ENCODE measurements at regions of chr5 and their contacts with region 1.

Region 1: DNA sequence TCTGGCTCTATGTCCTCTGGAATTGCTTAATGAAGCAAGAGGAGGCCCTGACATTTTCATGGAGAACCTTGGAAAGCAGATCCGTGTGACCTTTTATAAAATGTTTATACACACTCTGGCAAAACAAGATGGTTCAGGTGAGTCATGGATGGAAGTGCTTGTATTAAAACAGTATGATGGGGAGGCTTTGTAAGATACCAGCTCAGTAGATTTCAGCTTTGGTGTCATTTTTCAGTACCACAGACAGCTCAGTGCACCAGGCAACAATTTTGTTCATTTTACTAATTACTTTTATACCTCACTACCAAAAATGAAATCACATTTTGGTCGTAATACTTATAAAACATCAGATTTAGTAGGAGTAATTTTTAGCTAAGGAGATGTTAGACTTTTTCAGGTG is 5.2 kb downstream of the KCNN2 start:
- DNase-seq: no peak
- ATAC-seq: no peak
- H3K4me3 ChIP-seq: no peak overlapping the region
- H3K27ac ChIP-seq: no peak overlapping the region
- H3K4me1 ChIP-seq: no peaks in the 10 kb centered on the region
- H3K27me3 ChIP-seq: peaks cover 0 to 10% of the 10 kb centered on the region in 2 experiments; a peak in 2 of 4 replicates
- CTCF ChIP-seq: no peak
- EP300 ChIP-seq: no peak
- POLR2A ChIP-seq: no peak
- RAD21 ChIP-seq: no peak

Region 2: DNA sequence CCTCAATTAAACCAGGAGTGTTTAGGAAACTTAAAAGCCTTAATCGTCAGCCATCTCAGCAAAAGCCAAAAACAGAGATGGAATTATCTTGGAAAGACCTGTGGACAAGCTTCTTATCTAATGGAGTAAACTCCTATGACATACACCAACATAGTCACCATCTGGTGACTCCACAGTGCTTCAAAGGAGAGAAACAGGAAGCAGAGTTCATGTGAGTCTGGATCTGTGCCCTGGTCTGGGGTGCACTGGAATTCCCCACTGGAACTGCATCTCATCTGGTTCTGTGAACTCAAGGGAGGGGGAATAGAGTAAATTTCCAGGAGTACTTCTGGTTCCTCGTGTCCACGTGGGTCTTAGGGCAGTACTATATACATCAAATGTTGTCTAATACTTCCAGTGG is 41.5 kb before region 1 on chr5:
- CTCF ChIA-PET with region 1: no interaction called
- POLR2A ChIA-PET with region 1: no interaction called
- RAD21 ChIA-PET with region 1: no interaction called
- SMC1A ChIA-PET with region 1: no interaction called
- in situ Hi-C with region 1: no loop called
- intact Hi-C with region 1: no loop called
- DNase-seq: no peak
- ATAC-seq: peak; percentile 60
- H3K4me3 ChIP-seq: no peak overlapping the region
- H3K27ac ChIP-seq: no peak overlapping the region
- H3K4me1 ChIP-seq: no peaks in the 10 kb centered on the region; the same call in 1 of the 2 replicates
- H3K27me3 ChIP-seq: no peaks in the 10 kb centered on the region
- CTCF ChIP-seq: no peak
- EP300 ChIP-seq: no peak
- POLR2A ChIP-seq: no peak
- RAD21 ChIP-seq: no peak

Region 3: GRCh38 chr5:114377946-114378345 is 10.9 kb after region 1 on chr5:
- CTCF ChIA-PET with region 1: interaction called, 13 read pairs
- POLR2A ChIA-PET with region 1: interaction called, 5 read pairs
- RAD21 ChIA-PET with region 1: interaction called, 17 read pairs
- SMC1A ChIA-PET with region 1: interaction called, 23 read pairs
- in situ Hi-C with region 1: no loop called
- intact Hi-C with region 1: no loop called
- DNase-seq: no peak
- ATAC-seq: no peak
- H3K4me3 ChIP-seq: no peak overlapping the region
- H3K27ac ChIP-seq: no peak overlapping the region
- H3K4me1 ChIP-seq: no peaks in the 10 kb centered on the region
- H3K27me3 ChIP-seq: no peaks in the 10 kb centered on the region
- CTCF ChIP-seq: no peak
- EP300 ChIP-seq: no peak
- POLR2A ChIP-seq: no peak
- RAD21 ChIP-seq: no peak

Region 4: DNA sequence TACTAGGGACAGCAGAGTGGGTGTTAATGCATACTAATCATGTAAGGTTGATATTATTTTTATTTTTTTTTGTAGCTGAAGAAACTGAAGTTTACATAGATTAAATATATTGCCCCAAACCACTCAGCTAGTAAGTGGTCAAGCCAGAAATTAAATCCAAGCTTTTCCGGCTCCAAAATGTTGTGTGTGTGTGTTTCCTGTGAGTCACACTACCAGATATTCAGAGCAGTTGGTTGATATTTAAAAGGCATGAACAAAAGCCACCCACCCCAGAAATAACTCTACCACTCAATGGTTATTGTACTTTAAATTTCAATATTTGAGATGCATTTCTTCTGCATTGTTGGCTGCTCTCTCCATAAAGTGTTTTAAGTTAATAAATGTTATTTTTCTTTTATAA is 24.3 kb after region 1 on chr5:
- CTCF ChIA-PET with region 1: interaction called, 5 read pairs
- POLR2A ChIA-PET with region 1: interaction called, 5 read pairs
- RAD21 ChIA-PET with region 1: interaction called, 4 read pairs
- SMC1A ChIA-PET with region 1: interaction called, 14 read pairs
- in situ Hi-C with region 1: no loop called
- intact Hi-C with region 1: no loop called
- DNase-seq: no peak
- ATAC-seq: no peak
- H3K4me3 ChIP-seq: no peak overlapping the region
- H3K27ac ChIP-seq: no peak overlapping the region
- H3K4me1 ChIP-seq: no peaks in the 10 kb centered on the region
- H3K27me3 ChIP-seq: no peaks in the 10 kb centered on the region
- CTCF ChIP-seq: no peak
- EP300 ChIP-seq: no peak
- POLR2A ChIP-seq: no peak
- RAD21 ChIP-seq: no peak

Region 5: GRCh38 chr5:114418176-114419066 is 51.4 kb after region 1 on chr5:
- CTCF ChIA-PET with region 1: interaction called, 12 read pairs
- POLR2A ChIA-PET with region 1: interaction called, 4 read pairs
- RAD21 ChIA-PET with region 1: interaction called, 45 read pairs
- SMC1A ChIA-PET with region 1: interaction called, 55 read pairs
- in situ Hi-C with region 1: no loop called
- intact Hi-C with region 1: loop called (anchors 1 kb)
- DNase-seq: peak; percentile 56
- ATAC-seq: peak; percentile 91
- H3K4me3 ChIP-seq: 0 out of 2 replicates have a peak overlapping the region, but pooled peaks have one; percentile 3
- H3K27ac ChIP-seq: peak overlapping the region; percentile 43; the same call in 1 of the 2 replicates
- H3K4me1 ChIP-seq: no peaks in the 10 kb centered on the region
- H3K27me3 ChIP-seq: no peaks in the 10 kb centered on the region
- CTCF ChIP-seq: no peak
- EP300 ChIP-seq: peak; percentile 94 to 96
- POLR2A ChIP-seq: no peak
- RAD21 ChIP-seq: peak; percentile 24; the same call in 1 of the 2 replicates

Region 6: DNA sequence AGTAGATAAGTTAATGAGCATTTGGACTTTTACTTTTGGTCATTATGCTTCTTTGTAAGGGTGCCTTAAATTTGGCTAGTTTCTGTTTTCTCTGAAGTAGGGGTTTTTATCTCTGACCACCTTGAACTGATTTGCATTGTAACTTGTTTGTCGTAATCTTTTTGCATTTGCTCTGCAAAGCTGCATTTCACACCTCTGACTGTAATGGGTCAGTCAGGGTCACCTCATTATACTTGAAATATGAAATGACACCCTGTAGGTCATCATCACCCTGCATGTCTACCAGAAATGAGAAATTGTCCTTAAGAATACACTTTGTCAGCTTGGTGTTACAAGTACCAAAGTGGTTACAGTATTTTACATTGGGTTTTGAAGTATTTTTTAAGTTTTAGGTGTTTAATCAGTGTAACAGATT is 68.9 kb after region 1 on chr5:
- CTCF ChIA-PET with region 1: interaction called, 27 read pairs
- POLR2A ChIA-PET with region 1: interaction called, 6 read pairs
- RAD21 ChIA-PET with region 1: interaction called, 102 read pairs
- SMC1A ChIA-PET with region 1: interaction called, 142 read pairs
- in situ Hi-C with region 1: no loop called
- intact Hi-C with region 1: no loop called
- DNase-seq: peak; percentile 73
- ATAC-seq: peak; percentile 84
- H3K4me3 ChIP-seq: no peak overlapping the region
- H3K27ac ChIP-seq: no peak overlapping the region
- H3K4me1 ChIP-seq: no peaks in the 10 kb centered on the region; the same call in 1 of the 2 replicates
- H3K27me3 ChIP-seq: no peaks in the 10 kb centered on the region
- CTCF ChIP-seq: no peak
- EP300 ChIP-seq: peak; percentile 69 to 82; a peak in 2 of 4 replicates
- POLR2A ChIP-seq: no peak
- RAD21 ChIP-seq: no peak

Region 7: GRCh38 chr5:114458726-114459125 is 91.7 kb after region 1 on chr5:
- CTCF ChIA-PET with region 1: interaction called, 5 read pairs
- POLR2A ChIA-PET with region 1: no interaction called
- RAD21 ChIA-PET with region 1: interaction called, 11 read pairs
- SMC1A ChIA-PET with region 1: interaction called, 23 read pairs
- in situ Hi-C with region 1: no loop called
- intact Hi-C with region 1: no loop called
- DNase-seq: no peak
- ATAC-seq: no peak
- H3K4me3 ChIP-seq: no peak overlapping the region
- H3K27ac ChIP-seq: no peak overlapping the region
- H3K4me1 ChIP-seq: no peaks in the 10 kb centered on the region
- H3K27me3 ChIP-seq: no peaks in the 10 kb centered on the region
- CTCF ChIP-seq: no peak
- EP300 ChIP-seq: no peak
- POLR2A ChIP-seq: no peak
- RAD21 ChIP-seq: no peak

Region 8: GRCh38 chr5:114473541-114473940 is 106.5 kb after region 1 on chr5:
- CTCF ChIA-PET with region 1: no interaction called
- POLR2A ChIA-PET with region 1: no interaction called
- RAD21 ChIA-PET with region 1: no interaction called
- SMC1A ChIA-PET with region 1: no interaction called
- in situ Hi-C with region 1: no loop called
- intact Hi-C with region 1: no loop called
- DNase-seq: no peak
- ATAC-seq: no peak
- H3K4me3 ChIP-seq: no peak overlapping the region
- H3K27ac ChIP-seq: no peak overlapping the region
- H3K4me1 ChIP-seq: no peaks in the 10 kb centered on the region
- H3K27me3 ChIP-seq: no peaks in the 10 kb centered on the region
- CTCF ChIP-seq: no peak
- EP300 ChIP-seq: no peak
- POLR2A ChIP-seq: no peak
- RAD21 ChIP-seq: no peak